ENCODE measurements at regions of chr17 and their contacts with region 1.

Region 1: DNA sequence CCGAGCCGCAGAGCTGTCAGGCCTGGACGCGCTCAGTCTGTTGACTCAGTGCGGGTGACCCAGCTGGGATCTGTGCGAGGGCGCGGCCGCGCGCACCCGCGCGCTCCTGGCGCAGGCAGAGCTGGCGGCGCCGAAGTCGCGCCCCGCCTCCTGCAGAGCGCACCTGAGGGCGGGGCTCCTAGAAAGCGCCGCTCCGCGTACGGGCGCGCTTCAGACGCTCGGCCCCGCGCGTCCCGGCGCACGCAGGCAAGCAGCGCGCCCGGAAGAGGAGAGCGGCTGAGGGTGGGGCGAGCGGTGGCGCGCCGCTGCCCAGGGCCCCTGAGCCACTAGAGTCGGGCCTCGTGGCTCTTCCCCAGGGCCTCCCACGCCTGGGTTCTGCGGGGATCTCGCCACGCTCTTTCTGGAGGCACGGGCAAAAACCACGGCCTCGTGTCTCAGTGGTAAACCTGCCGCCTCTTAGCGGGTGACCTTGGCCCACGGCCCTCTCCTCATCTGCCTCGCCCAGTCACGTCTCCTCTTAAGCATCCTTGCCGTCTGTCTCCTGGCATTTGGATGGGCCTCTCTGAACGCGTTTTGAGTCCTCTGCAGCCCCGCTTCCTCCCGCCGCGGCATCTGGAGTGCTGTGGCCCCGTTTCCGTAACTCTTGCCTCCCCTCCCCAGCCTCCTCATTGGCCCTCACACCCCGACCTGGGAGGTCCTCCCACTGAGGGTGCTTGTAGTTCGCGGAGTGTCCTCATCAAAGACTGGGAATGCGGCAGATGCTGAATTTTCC is at the start of gene ABCA5:
- DNase-seq: peak; percentile 86
- H3K4me3 Mint-ChIP-seq: peak within 1 kb of the TSS; percentile 97
- H3K27ac Mint-ChIP-seq: peak within 1 kb of the TSS; percentile 96
- H3K4me1 Mint-ChIP-seq: peaks cover 23% of the 10 kb centered on the region
- H3K27me3 Mint-ChIP-seq: peaks cover 13% of the 10 kb centered on the region
- total RNA-seq, gene ABCA5: 12.8 and 15.1 TPM in 2 replicates

Region 2: GRCh38 chr17:69245617-69246016 is 81.6 kb before region 1 on chr17:
- intact Hi-C with region 1: no loop called
- DNase-seq: no peak
- H3K4me3 Mint-ChIP-seq: no peak overlapping the region
- H3K27ac Mint-ChIP-seq: no peak overlapping the region
- H3K4me1 Mint-ChIP-seq: no peaks in the 10 kb centered on the region
- H3K27me3 Mint-ChIP-seq: no peaks in the 10 kb centered on the region

Region 3: DNA sequence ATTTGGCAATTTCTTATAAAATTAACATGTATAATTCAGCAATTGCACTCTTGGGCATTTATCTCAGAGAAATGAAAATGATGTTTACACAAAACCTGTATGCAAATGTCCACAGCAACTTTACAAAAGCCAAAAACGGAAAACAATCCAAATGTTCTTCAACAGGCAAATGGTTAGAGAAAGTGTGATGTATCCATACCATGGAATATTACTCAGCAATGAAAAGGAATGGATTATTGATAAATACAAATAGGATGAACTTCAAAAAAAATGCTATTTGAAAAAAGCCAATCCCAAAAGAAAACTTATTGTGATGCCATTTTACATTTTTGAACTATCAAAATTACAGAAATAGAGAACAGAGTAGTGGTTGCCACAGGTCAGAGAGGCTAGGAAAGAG is 61.4 kb before region 1 on chr17:
- intact Hi-C with region 1: no loop called
- DNase-seq: no peak
- H3K4me3 Mint-ChIP-seq: no peak overlapping the region
- H3K27ac Mint-ChIP-seq: no peak overlapping the region
- H3K4me1 Mint-ChIP-seq: no peaks in the 10 kb centered on the region
- H3K27me3 Mint-ChIP-seq: no peaks in the 10 kb centered on the region

Region 4: GRCh38 chr17:69358688-69359596 is 31.7 kb after region 1 on chr17:
- intact Hi-C with region 1: no loop called
- DNase-seq: no peak
- H3K4me3 Mint-ChIP-seq: no peak overlapping the region
- H3K27ac Mint-ChIP-seq: no peak overlapping the region
- H3K4me1 Mint-ChIP-seq: no peaks in the 10 kb centered on the region
- H3K27me3 Mint-ChIP-seq: peaks cover 11% of the 10 kb centered on the region

Region 5: GRCh38 chr17:69388822-69389442 is 61.7 kb after region 1 on chr17:
- intact Hi-C with region 1: loop called (anchors 2 kb)
- DNase-seq: no peak
- H3K4me3 Mint-ChIP-seq: no peak overlapping the region
- H3K27ac Mint-ChIP-seq: no peak overlapping the region
- H3K4me1 Mint-ChIP-seq: no peaks in the 10 kb centered on the region
- H3K27me3 Mint-ChIP-seq: peaks cover 3% of the 10 kb centered on the region

Region 6: DNA sequence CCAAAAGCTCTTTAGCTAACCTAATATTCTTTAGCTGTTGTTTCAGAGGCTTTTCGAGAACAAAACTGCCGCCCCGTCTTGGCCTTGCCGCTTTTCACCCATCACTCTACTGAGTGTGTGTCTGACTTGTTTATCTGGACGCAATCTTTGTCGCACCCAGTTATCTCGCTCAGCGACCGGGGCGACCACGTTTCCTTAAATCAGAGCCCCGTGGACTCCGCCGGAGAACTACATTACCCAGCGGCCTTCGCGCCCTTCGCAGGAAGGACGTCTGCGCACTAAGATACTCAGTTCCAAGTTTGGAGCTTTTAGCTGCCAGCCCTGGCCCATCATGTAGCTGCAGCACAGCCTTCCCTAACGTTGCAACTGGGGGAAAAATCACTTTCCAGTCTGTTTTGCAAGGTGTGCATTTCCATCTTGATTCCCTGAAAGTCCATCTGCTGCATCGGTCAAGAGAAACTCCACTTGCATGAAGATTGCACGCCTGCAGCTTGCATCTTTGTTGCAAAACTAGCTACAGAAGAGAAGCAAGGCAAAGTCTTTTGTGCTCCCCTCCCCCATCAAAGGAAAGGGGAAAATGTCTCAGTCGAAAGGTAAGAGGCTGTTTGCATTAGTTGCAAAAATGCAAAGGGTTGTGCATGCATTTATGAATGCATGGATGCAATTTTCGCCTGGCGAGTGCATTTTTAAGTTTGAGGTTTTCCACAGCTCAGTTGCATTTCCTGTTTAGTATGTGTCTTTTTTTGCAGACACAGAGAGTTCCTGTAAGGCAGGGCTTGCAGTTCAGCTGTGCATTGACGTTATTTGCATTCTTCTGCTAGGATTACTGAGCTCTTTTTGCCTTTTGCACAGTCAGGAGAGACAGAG is 87.4 kb after region 1 on chr17 and contains the start of gene MAP2K6:
- intact Hi-C with region 1: loop called (anchors 1 kb)
- DNase-seq: peak; percentile 67
- H3K4me3 Mint-ChIP-seq: no peak within 1 kb of the TSS
- H3K27ac Mint-ChIP-seq: no peak within 1 kb of the TSS
- H3K4me1 Mint-ChIP-seq: peaks cover 10% of the 10 kb centered on the region
- H3K27me3 Mint-ChIP-seq: no peaks in the 10 kb centered on the region
- total RNA-seq, gene MAP2K6: 0.88 and 1.7 TPM in 2 replicates

Region 7: GRCh38 chr17:70168977-70169708 is 841.9 kb after region 1 on chr17 and contains the start of gene KCNJ2:
- intact Hi-C with region 1: loop called (anchors 10 kb)
- DNase-seq: peak; percentile 53
- H3K4me3 Mint-ChIP-seq: peak within 1 kb of the TSS; percentile 81
- H3K27ac Mint-ChIP-seq: no peak within 1 kb of the TSS
- H3K4me1 Mint-ChIP-seq: peaks cover 18% of the 10 kb centered on the region
- H3K27me3 Mint-ChIP-seq: peaks cover 49% of the 10 kb centered on the region
- total RNA-seq, gene KCNJ2: 0.05 TPM in 1 of 2 replicates, not detected in the other